Activated CD4-positive, alpha-beta memory T cell treated with anti-CD3 and anti-CD28 coated beads for 36 hours (primary cell): ENCODE measurements at regions of chr19 and their contacts with region 1.

Region 1: GRCh38 chr19:39704181-39705044 is at the start of gene LGALS14:
- DNase-seq: peak; percentile 65
- H3K4me3 Mint-ChIP-seq: peak within 1 kb of the TSS; percentile 40
- H3K27ac Mint-ChIP-seq: peak within 1 kb of the TSS; percentile 75
- H3K4me1 Mint-ChIP-seq: peaks cover 43% of the 10 kb centered on the region
- H3K27me3 Mint-ChIP-seq: peaks cover 5% of the 10 kb centered on the region
- total RNA-seq, gene LGALS14: 1.6 to 2.5 TPM

Region 2: DNA sequence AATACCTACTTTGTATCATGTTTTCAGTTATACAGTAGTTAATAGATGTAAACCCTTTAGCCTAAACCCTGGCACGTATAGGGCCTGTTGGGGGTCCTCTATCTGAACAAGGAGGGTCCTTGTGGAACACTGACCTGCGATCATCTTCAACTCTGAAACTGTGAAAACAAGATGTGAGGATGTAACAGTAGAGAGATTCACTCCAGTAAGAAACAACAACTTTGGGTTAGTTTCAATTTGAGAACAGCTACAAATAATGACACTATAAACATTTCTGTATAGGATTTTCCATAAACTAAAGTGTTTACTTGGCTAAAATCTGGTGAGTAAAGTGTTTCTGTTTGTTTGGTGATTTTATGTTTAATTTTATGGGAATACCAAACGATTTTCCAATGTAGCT is 31.3 kb after region 1 on chr19:
- CTCF ChIA-PET with region 1: no interaction called
- POLR2A ChIA-PET with region 1: no interaction called
- intact Hi-C with region 1: loop called (anchors 1 kb)
- DNase-seq: no peak
- H3K4me3 Mint-ChIP-seq: no peak overlapping the region
- H3K27ac Mint-ChIP-seq: peak overlapping the region; percentile 78
- H3K4me1 Mint-ChIP-seq: peaks cover 48% of the 10 kb centered on the region
- H3K27me3 Mint-ChIP-seq: peaks cover 2% of the 10 kb centered on the region